ENCODE measurements at regions of chr1 and their contacts with region 1.

Region 1: GRCh38 chr1:207868774-207869721 is 41.9 kb downstream of the CD34 start:
- DNase-seq: peak; percentile 76 to 95 (median 93)
- ATAC-seq: peak; percentile 58 to 68
- H3K4me3 ChIP-seq: peak overlapping the region; percentile 88
- H3K27ac ChIP-seq: peak overlapping the region; percentile 74
- H3K4me1 ChIP-seq: peaks cover 26% of the 10 kb centered on the region
- H3K27me3 ChIP-seq: no peaks in the 10 kb centered on the region

Region 2: GRCh38 chr1:207828485-207829158 is 40.4 kb before region 1 on chr1:
- intact Hi-C with region 1: loop called (anchors 2 to 5 kb)
- DNase-seq: peak; percentile 75 to 90 (median 88)
- ATAC-seq: peak; percentile 60 to 65
- H3K4me3 ChIP-seq: no peak overlapping the region
- H3K27ac ChIP-seq: peak overlapping the region; percentile 71
- H3K4me1 ChIP-seq: peaks cover 46% of the 10 kb centered on the region
- H3K27me3 ChIP-seq: no peaks in the 10 kb centered on the region

Region 3: GRCh38 chr1:208007938-208008342 is 138.9 kb after region 1 on chr1:
- intact Hi-C with region 1: no loop called
- DNase-seq: no peak
- ATAC-seq: peak in 1 of 2 donors; percentile 58
- H3K4me3 ChIP-seq: no peak overlapping the region
- H3K27ac ChIP-seq: no peak overlapping the region
- H3K4me1 ChIP-seq: no peaks in the 10 kb centered on the region
- H3K27me3 ChIP-seq: no peaks in the 10 kb centered on the region

Region 4: GRCh38 chr1:208476340-208477041 is 607.4 kb after region 1 on chr1:
- intact Hi-C with region 1: no loop called
- DNase-seq: peak in 2 of 3 donors; percentile 20 to 46
- ATAC-seq: peak; percentile 84 to 96
- H3K4me3 ChIP-seq: no peak overlapping the region
- H3K27ac ChIP-seq: no peak overlapping the region
- H3K4me1 ChIP-seq: peaks cover 10% of the 10 kb centered on the region
- H3K27me3 ChIP-seq: no peaks in the 10 kb centered on the region